ENCODE measurements at regions of chr19 and their contacts with region 1.

Region 1: DNA sequence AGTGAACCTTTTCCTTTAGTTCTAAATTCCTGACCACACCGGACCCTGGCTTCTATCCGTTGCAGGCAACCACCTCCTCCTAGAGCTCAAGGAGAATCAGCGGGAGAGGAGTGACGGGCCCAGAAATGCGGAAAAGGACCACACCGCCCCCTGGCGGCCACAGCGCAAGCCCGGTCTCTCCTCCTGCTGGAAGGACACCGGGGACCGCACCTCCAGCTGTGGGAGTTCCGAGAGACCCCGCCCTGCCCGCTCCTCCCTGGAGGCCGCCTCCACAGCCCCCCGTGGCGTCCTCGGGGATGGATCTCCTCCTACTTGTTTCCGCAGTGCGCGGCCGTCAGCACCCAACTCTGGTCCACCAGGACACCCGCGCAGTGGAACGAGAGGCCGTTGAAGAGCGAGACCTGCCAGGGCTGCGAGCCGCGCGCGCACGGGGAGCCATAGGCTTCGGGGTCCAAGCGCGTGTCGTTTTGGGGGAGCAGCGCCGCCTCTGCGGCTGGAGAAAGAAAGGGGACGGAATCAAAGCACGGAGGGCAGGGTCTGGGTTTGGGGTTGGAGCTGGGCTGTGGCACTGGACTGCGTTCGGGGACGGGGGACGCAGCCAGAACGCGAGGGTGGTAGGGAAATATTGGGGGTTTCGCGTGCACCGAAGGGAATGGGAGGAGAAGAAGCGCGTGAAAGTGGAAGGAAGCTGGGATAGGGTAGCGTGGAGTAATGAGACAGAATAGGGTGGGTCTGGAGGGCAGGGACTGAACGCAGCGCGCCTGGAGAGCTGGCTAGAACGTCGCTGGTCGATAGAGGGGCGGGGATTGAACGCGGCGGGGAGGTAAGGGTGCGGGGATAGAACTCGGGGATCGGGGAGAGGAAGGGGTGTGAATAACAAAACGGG is 2.5 kb downstream of the KLK10 start:
- DNase-seq: peak; percentile 87 to 98
- ATAC-seq: peak; percentile 63 to 84
- H3K4me3 ChIP-seq: peak overlapping the region; percentile 42
- H3K27ac ChIP-seq: peak overlapping the region in 1 of 2 experiments; percentile 27; a peak in 1 of 6 replicates
- H3K4me1 ChIP-seq: peaks cover 23% of the 10 kb centered on the region
- CTCF ChIP-seq: peak; percentile 84
- EP300 ChIP-seq: no peak
- POLR2A ChIP-seq: no peak
- RAD21 ChIP-seq: peak; percentile 84 to 89

Region 2: GRCh38 chr19:50909240-50910070 is 107.6 kb before region 1 on chr19:
- CTCF ChIA-PET with region 1: no interaction called
- POLR2A ChIA-PET with region 1: no interaction called
- DNase-seq: peak; percentile 82 to 86
- ATAC-seq: peak; percentile 52 to 90
- H3K4me3 ChIP-seq: peak overlapping the region; percentile 41
- H3K27ac ChIP-seq: peak overlapping the region in 1 of 2 experiments; percentile 26; a peak in 3 of 6 replicates
- H3K4me1 ChIP-seq: peaks cover 10% of the 10 kb centered on the region; the same call in 1 of the 3 replicates
- CTCF ChIP-seq: no peak
- EP300 ChIP-seq: no peak
- POLR2A ChIP-seq: no peak
- RAD21 ChIP-seq: no peak

Region 3: DNA sequence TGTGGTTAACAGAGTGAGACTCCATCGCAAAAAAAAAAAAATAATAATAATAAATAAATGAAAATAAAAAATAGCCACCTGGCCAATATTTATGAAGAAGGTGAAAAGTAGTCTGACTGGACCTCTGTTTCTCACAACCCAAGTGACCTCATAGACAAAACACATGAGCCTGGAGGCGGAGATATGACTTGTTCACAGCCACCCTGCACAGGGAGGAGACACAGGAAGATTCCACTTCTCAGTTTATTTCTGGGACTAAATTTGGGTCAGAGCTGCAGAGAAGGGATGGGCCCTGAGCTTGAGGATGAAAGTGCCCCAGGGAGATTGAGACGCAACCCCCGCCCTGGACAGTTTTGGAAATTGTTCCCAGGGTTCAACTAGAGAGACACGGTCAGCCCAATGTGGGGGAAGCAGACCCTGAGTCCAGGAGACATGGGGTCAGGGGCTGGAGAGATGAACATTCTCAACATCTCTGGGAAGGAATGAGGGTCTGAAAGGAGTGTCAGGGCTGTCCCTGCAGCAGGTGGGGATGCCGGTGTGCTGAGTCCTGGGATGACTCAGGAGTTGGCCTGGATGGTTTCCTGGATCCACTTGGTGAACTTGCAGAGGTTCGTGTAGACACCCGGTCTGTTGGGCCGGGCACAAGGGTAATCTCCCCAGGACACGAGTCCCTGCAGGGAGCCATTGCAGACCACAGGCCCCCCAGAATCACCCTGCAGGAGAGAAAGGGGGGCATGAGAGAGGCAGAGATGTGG is 73.8 kb before region 1 on chr19:
- CTCF ChIA-PET with region 1: interaction called, 12 read pairs
- POLR2A ChIA-PET with region 1: no interaction called
- DNase-seq: no peak
- ATAC-seq: no peak
- H3K4me3 ChIP-seq: no peak overlapping the region
- H3K27ac ChIP-seq: no peak overlapping the region
- H3K4me1 ChIP-seq: no peaks in the 10 kb centered on the region
- CTCF ChIP-seq: no peak
- EP300 ChIP-seq: no peak
- POLR2A ChIP-seq: no peak
- RAD21 ChIP-seq: no peak

Region 4: DNA sequence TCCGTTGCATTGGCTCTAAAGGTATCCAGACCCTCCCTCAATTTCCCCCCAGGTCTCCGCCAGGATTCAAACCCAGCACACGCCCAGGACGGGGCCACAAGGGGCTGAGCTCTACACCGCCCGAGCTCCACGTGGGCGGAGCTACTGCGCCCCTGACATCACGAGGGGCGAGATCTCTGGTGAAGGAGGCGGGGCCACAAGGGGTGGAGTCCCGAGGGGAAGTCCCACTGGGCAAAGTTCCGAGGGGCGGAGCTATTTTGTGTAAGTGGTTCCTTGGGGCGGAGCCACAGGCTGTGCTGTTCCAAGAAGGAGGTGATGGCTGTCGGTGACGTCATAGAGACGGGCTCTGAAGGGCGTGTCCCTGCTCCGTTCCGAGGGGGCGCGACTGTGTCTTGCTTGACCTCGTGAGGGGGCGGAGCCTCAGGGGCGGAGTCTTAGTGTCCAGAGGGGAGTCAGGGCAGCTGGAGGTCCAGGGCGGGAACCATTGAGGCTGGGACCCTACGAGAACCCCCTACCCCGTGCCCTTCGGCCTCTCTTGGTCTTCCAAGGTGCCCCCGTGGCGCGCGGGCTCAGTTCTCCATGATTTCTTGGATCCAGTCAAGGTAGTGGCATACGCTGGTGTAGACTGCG is 14.4 kb before region 1 on chr19:
- CTCF ChIA-PET with region 1: interaction called, 21 read pairs
- POLR2A ChIA-PET with region 1: no interaction called
- DNase-seq: peak; percentile 92 to 94
- ATAC-seq: peak; percentile 74 to 89
- H3K4me3 ChIP-seq: peak overlapping the region; percentile 35
- H3K27ac ChIP-seq: no peak overlapping the region
- H3K4me1 ChIP-seq: peaks cover 6% of the 10 kb centered on the region; the same call in 2 of the 3 replicates
- CTCF ChIP-seq: no peak
- EP300 ChIP-seq: no peak
- POLR2A ChIP-seq: no peak
- RAD21 ChIP-seq: no peak

Region 5: DNA sequence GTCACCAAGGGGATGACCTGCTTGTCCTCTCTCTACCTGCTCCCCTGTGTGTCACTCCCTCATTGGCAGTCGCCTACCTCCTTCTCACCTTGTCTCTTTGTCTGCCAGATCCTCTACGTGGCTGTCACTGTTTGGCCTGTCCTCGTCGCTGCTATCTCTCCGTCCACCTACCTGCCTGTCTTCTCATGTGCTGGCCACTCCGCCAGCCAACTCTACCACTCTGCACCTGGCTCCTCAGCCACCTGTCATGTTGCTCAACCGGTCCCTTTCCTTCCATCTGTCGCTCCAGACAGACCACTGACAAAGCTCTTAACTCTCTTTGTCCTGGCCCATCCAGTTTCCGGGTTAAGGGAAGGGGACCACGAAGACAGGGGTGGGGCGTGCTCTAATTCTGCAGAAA is 17.7 kb after region 1 on chr19 and contains the start of gene KLK12:
- CTCF ChIA-PET with region 1: interaction called, 14 read pairs
- POLR2A ChIA-PET with region 1: no interaction called
- DNase-seq: no peak
- ATAC-seq: peak in 1 of 2 experiments; percentile 36; a peak in 2 of 6 replicates
- H3K4me3 ChIP-seq: no peak within 1 kb of the TSS
- H3K27ac ChIP-seq: no peak within 1 kb of the TSS
- H3K4me1 ChIP-seq: no peaks in the 10 kb centered on the region
- CTCF ChIP-seq: no peak
- EP300 ChIP-seq: no peak
- POLR2A ChIP-seq: no peak
- RAD21 ChIP-seq: no peak
- polyA plus RNA-seq, gene KLK12: not detected in 2 replicates

Region 6: DNA sequence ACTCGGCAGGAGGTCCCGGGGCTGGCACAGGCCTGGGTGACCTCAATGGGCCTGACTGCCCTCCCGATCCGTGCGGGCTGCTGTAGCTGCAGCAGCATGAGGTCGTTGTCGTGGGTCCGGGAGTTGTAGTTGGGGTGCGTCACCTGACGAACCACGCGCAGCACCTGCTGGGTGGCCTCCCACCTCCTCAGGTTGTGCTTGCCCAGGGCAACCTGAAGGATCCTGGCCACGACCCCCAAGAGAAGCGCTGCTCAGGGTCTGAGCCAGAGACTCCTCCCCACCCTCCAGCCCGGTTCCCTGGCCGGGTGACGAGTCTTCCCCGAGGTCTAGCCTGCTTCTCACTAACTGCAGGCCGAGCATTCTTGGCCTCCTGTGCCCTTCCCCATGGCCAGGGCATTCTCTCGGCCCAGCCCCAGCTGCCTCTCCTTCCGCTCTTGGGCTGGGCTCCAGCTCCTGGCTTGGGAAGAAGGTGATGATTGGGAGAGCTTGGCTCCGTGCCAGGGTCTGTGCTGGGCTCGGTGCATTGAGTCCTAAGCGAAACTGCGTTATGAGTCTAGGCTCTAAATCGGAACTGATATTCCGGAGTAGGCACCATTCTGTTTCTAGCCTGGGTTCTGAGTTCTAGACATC is 62.6 kb after region 1 on chr19:
- CTCF ChIA-PET with region 1: interaction called, 11 read pairs
- POLR2A ChIA-PET with region 1: no interaction called
- DNase-seq: no peak
- ATAC-seq: no peak
- H3K4me3 ChIP-seq: no peak overlapping the region
- H3K27ac ChIP-seq: no peak overlapping the region
- H3K4me1 ChIP-seq: no peaks in the 10 kb centered on the region
- CTCF ChIP-seq: no peak
- EP300 ChIP-seq: no peak
- POLR2A ChIP-seq: no peak
- RAD21 ChIP-seq: no peak

Region 7: DNA sequence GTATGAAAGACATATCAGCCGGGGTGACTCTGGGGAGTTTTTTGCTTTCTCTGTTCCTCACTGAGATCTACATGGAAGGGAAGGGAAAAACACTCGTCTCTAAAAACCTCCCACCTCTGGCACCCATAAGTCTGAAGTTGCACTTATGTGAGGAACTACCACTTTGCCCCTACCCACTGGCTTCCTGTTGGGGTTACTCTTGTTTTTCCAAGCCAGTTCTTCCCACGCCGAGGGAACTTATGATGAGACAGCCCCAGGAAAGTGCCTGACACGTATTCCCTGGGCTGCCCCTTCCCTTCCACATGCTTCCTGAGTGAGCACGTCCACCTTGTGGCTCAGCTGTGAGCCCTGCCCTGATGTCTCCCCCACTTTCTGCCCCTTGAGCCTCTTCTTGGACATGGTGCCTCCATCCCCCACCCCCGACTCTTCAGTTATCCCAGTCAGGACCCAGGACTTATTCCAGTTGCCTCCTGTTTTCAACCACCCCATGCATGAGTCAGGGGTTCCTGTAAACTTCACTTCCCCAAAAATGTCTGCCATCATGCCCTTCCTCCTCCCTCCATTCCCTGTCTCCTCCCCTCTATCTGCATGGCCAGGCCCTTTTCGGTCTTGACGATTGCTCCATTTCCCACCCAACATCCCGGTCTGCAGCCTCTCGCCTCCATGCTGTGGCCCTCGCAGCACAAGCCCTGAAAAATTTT is 120.0 kb after region 1 on chr19:
- CTCF ChIA-PET with region 1: no interaction called
- POLR2A ChIA-PET with region 1: interaction called, 12 read pairs
- DNase-seq: no peak
- ATAC-seq: no peak
- H3K4me3 ChIP-seq: no peak overlapping the region
- H3K27ac ChIP-seq: no peak overlapping the region
- H3K4me1 ChIP-seq: no peaks in the 10 kb centered on the region
- CTCF ChIP-seq: no peak
- EP300 ChIP-seq: no peak
- POLR2A ChIP-seq: no peak
- RAD21 ChIP-seq: no peak

Measured in A549 (cell line).